ENCODE measurements at regions of chr6 and their contacts with region 1.

Region 1: GRCh38 chr6:83615025-83615999 is 93.6 kb downstream of the SNAP91 start:
- DNase-seq: peak; percentile 18
- ATAC-seq: peak; percentile 69
- H3K4me3 ChIP-seq: no peak overlapping the region
- H3K27ac ChIP-seq: no peak overlapping the region
- H3K4me1 ChIP-seq: no peaks in the 10 kb centered on the region
- H3K27me3 ChIP-seq: no peaks in the 10 kb centered on the region
- CTCF ChIP-seq: peak; percentile 53
- EP300 ChIP-seq: no peak
- POLR2A ChIP-seq: no peak
- RAD21 ChIP-seq: no peak

Region 2: DNA sequence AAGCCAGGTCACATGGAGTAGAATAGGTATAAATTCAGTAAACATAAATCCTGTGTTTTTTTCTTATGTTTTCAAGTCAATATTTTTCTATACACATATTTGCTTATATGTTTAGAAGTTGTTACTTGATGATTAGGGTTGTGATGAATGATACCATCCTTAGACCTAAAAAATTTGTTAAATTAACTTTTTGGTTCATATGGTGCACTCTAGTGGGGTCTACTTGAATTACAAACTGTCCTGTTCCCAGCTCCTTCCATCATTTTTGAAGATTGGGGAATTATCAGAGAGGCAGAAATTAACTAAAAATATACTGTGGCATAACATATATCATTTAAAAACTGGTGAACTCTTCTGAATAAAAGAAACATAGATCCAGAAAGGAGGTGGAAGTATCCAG is 189.6 kb after region 1 on chr6:
- CTCF ChIA-PET with region 1: no interaction called
- POLR2A ChIA-PET with region 1: no interaction called
- in situ Hi-C with region 1: no loop called
- intact Hi-C with region 1: loop called (anchors 10 kb)
- DNase-seq: no peak
- ATAC-seq: no peak
- H3K4me3 ChIP-seq: no peak overlapping the region
- H3K27ac ChIP-seq: no peak overlapping the region
- H3K4me1 ChIP-seq: no peaks in the 10 kb centered on the region
- H3K27me3 ChIP-seq: no peaks in the 10 kb centered on the region
- CTCF ChIP-seq: no peak
- EP300 ChIP-seq: no peak
- POLR2A ChIP-seq: no peak
- RAD21 ChIP-seq: no peak

Region 3: DNA sequence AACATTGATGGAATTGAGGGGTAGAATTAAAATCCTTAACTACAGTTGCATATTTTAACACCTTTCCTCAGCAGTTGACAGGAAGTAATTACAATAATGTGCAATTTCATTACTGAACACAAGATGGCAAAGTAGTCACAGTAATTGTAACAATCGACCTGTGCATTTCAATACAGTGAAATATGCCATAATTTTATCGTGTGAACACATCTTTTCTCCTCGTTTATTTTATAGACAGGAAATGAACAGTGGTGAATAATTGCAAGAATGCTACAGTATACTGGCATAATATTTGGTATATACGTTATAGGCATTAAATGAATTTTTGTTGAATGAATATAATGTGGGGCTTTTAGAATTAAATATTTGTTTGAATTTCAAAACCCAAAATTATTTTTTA is 269.2 kb after region 1 on chr6:
- CTCF ChIA-PET with region 1: no interaction called
- POLR2A ChIA-PET with region 1: no interaction called
- in situ Hi-C with region 1: no loop called
- intact Hi-C with region 1: loop called (anchors 1 kb)
- DNase-seq: peak; percentile 27
- ATAC-seq: peak; percentile 55; the same call in 2 of the 3 replicates
- H3K4me3 ChIP-seq: no peak overlapping the region
- H3K27ac ChIP-seq: no peak overlapping the region
- H3K4me1 ChIP-seq: peaks cover 4% of the 10 kb centered on the region
- H3K27me3 ChIP-seq: no peaks in the 10 kb centered on the region
- CTCF ChIP-seq: peak; percentile 82
- EP300 ChIP-seq: no peak
- POLR2A ChIP-seq: no peak
- RAD21 ChIP-seq: peak; percentile 64

Region 4: DNA sequence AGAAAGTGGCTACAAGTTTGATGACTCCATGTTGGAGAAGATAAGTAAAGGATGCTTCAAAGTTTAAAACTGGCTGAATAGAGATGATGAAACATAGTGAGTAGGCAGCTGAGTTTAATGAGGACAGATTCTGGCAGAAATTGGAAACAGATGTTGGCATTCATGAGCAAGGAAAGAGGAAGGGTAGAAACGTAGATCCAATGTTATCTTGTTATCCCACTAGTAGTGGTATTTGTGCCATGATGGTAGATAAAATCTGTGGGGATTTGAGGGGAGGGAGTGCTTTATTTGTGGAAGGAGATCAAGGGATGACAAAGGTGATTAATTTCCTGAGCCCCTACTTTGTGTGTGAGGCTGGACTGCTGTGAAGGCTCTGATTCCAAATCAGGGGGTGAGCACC is 487.7 kb after region 1 on chr6:
- CTCF ChIA-PET with region 1: no interaction called
- POLR2A ChIA-PET with region 1: no interaction called
- in situ Hi-C with region 1: no loop called
- intact Hi-C with region 1: no loop called
- DNase-seq: no peak
- ATAC-seq: no peak
- H3K4me3 ChIP-seq: no peak overlapping the region
- H3K27ac ChIP-seq: no peak overlapping the region
- H3K4me1 ChIP-seq: no peaks in the 10 kb centered on the region
- H3K27me3 ChIP-seq: no peaks in the 10 kb centered on the region
- CTCF ChIP-seq: no peak
- EP300 ChIP-seq: no peak
- POLR2A ChIP-seq: no peak
- RAD21 ChIP-seq: no peak

Region 5: GRCh38 chr6:84220809-84221409 is 605.6 kb after region 1 on chr6:
- CTCF ChIA-PET with region 1: no interaction called
- POLR2A ChIA-PET with region 1: no interaction called
- in situ Hi-C with region 1: loop called (anchors 10 kb)
- intact Hi-C with region 1: loop called (anchors 1 kb)
- DNase-seq: no peak
- ATAC-seq: no peak
- H3K4me3 ChIP-seq: no peak overlapping the region
- H3K27ac ChIP-seq: no peak overlapping the region
- H3K4me1 ChIP-seq: peaks cover 3% of the 10 kb centered on the region
- H3K27me3 ChIP-seq: no peaks in the 10 kb centered on the region
- CTCF ChIP-seq: peak; percentile 41
- EP300 ChIP-seq: no peak
- POLR2A ChIP-seq: no peak
- RAD21 ChIP-seq: no peak

Region 6: DNA sequence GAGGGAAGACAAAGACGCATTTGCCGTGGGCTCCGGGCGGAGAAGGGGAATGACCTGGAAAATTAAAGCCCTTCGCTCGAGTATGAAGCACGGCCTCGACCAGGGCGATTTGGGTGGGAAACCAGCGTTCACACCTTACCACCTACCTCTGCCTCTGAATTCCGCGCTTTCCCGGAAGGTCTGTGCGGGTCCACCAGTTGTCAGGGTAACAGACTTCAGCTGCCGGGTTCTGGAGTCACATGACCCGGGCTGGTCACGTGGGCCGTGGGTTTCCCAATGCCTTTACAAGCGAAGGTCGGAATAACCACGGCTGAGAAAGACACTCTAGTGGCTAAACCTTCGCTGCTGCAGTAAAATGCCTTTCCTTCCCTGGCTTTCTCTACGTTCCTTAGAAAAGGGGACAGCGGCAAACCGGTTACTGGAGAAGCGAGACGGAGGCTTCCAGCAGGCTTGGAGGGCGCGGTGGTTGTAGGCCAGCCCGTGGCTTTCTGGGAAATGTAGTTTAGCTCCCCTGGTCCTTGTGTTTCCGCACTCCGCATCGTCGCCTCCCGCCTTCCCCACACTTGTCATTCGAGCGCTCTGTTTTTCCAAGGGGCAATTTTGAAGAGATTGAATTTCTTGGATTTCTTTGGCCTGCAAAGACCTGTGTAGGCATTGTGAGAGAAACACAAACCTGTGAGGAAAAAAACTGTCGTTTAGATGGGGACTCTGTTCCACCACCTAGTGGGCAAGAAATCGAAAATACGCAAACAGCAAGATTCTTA is 612.3 kb after region 1 on chr6 and contains the start of gene CEP162:
- CTCF ChIA-PET with region 1: no interaction called
- POLR2A ChIA-PET with region 1: no interaction called
- in situ Hi-C with region 1: loop called (anchors 10 kb)
- intact Hi-C with region 1: no loop called
- DNase-seq: peak; percentile 85
- ATAC-seq: peak; percentile 98
- H3K4me3 ChIP-seq: peak within 1 kb of the TSS; percentile 86 to 95 (median 88)
- H3K27ac ChIP-seq: peak within 1 kb of the TSS; percentile 79
- H3K4me1 ChIP-seq: peaks cover 17% of the 10 kb centered on the region
- H3K27me3 ChIP-seq: no peaks in the 10 kb centered on the region; a peak in 1 of 5 replicates
- CTCF ChIP-seq: peak; percentile 62
- EP300 ChIP-seq: no peak
- POLR2A ChIP-seq: no peak
- RAD21 ChIP-seq: 0 out of 2 replicates have a peak, but pooled peaks have one; percentile 9
- total RNA-seq, gene CEP162: 7.9 and 10.0 TPM in 2 replicates

Measured in HepG2 (cell line).